Upper lobe of right lung (tissue), 1 donor: ENCODE measurements at regions of chr17 and their contacts with region 1.

Region 1: DNA sequence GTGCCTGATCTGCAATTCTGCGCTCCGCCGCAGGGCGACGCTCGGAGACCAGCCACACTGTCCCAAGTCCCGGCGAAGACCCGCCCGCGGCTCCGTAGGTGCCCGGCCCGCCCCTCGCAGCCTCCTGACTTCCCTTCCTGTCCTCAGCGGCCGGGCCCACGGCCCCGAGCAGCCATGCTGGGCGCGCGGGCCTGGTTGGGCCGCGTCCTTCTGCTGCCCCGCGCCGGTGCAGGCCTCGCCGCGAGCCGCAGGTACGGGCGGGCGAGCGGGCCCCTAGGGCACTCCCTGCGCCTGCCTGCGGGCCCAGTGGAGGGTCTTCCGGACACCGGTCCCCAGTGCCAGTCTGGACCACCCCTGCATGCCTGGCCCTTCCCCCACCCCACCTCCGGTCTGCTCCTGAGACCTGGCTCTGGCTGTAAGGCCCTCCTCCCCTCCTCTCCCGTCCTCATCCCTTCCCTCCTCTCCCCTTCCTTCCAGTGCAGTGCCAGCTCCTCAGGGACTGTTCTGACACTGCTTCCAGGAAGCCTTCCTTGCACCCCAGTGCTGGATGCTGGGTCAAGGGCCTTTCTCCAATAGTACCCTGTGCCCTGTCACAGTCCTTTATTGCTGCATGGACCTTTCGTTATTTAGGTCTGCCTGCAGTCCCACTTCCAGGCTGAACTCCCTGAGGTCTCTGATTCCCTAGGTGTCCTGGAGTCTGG is at the start of gene SPATA20:
- DNase-seq: peak; percentile 96
- ATAC-seq: peak; percentile 87
- H3K4me3 ChIP-seq: peak within 1 kb of the TSS; percentile 63
- H3K27ac ChIP-seq: peak within 1 kb of the TSS; percentile 78
- H3K4me1 ChIP-seq: peaks cover 12% of the 10 kb centered on the region
- H3K27me3 ChIP-seq: no peaks in the 10 kb centered on the region
- CTCF ChIP-seq: peak; percentile 98
- total RNA-seq, gene SPATA20: 31.6 TPM

Region 2: GRCh38 chr17:50129728-50130558 is 417.2 kb before region 1 on chr17 and contains the start of gene SAMD14:
- intact Hi-C with region 1: no loop called
- DNase-seq: peak; percentile 69
- ATAC-seq: peak; percentile 55
- H3K4me3 ChIP-seq: peak within 1 kb of the TSS; percentile 37
- H3K27ac ChIP-seq: peak within 1 kb of the TSS; percentile 36
- H3K4me1 ChIP-seq: peaks cover 18% of the 10 kb centered on the region
- H3K27me3 ChIP-seq: peaks cover 5% of the 10 kb centered on the region
- CTCF ChIP-seq: no peak
- total RNA-seq, gene SAMD14: 21.5 TPM

Region 3: DNA sequence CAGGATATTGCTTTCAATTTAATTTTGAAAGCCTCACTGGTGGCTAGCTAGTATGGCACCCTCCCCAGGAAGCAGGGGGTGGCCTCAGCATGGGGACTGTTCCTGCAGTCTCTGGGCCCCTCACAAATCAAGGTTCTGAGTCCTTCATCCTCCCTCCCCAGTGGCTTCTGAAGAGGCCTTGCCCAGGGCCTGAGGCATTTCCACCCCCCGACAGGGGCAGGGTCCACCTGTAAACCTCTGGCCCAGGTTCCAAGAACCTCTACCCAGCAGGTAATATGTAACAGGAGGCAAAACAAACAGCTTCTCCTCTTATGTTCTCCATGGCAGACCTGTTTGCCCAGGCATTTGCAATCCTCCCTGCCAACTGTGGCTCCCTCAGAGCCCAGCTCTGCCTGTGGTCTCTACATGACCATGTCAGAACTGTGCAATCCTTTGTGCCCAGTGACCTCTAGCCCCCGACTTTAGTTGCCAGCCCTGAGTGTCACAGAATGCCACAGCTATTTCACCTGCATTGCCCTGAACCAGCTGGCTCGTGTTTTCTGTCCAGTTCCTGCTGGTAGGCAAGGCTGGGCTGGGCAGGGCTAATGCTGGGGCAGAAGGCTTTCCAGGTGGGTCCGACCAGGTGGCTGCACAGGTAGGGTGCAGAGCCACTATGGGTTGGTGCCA is 106.9 kb before region 1 on chr17:
- intact Hi-C with region 1: no loop called
- DNase-seq: peak; percentile 71
- ATAC-seq: peak; percentile 86
- H3K4me3 ChIP-seq: no peak overlapping the region
- H3K27ac ChIP-seq: peak overlapping the region; percentile 44
- H3K4me1 ChIP-seq: peaks cover 13% of the 10 kb centered on the region
- H3K27me3 ChIP-seq: no peaks in the 10 kb centered on the region
- CTCF ChIP-seq: no peak

Region 4: GRCh38 chr17:50626037-50626574 is 78.9 kb after region 1 on chr17:
- intact Hi-C with region 1: loop called (anchors 5 kb)
- DNase-seq: peak; percentile 84
- ATAC-seq: peak; percentile 63
- H3K4me3 ChIP-seq: no peak overlapping the region
- H3K27ac ChIP-seq: no peak overlapping the region
- H3K4me1 ChIP-seq: peaks cover 6% of the 10 kb centered on the region
- H3K27me3 ChIP-seq: peaks cover 24% of the 10 kb centered on the region
- CTCF ChIP-seq: peak; percentile 71

Region 5: DNA sequence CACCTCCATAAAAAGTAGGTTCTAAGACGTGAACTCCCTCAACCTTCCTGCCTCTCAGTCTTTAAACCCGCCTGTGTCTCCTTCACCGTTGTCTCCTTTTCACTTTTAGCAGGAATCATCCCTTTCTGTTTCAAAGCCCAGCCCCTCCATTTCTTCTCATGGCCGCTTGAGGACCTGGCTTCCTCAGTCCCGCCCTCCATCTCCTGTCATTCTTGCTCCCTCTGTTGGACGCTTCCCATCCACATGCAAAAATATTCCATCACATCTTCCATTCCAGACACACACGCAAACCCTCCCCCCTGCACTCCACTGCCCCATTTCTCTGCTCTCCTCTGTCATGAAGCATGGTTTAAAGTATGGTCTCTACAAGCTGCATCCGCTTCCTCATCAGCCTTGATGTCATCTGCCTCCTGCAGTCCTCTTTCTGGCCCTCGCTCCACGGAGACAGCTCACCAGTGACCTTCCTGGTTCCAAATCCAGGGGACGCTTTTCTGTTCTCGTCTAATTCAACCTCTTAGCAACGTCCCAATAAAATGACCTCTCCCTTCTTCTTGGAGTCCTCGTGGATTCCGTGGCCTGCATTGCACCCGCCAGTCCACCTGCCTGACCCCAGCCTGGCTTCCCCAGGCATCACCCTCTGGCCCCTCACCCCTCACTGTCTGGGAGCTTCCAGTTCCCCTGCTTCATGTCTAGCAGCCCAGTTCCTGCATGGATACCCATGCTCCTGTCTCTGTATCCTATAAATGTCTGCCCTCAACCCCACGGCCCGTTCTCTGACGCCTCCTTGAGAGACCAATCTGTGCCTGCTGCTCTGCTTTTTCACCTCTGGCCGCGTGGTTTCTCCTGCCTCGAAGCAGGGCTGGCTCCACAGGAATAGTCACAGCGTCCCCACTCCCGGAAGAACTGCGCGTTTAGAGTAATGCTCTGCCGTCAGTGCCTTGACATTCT is 134.4 kb after region 1 on chr17:
- intact Hi-C with region 1: loop called (anchors 10 kb)
- DNase-seq: peak; percentile 47
- ATAC-seq: peak; percentile 67
- H3K4me3 ChIP-seq: no peak overlapping the region
- H3K27ac ChIP-seq: no peak overlapping the region
- H3K4me1 ChIP-seq: peaks cover 7% of the 10 kb centered on the region
- H3K27me3 ChIP-seq: no peaks in the 10 kb centered on the region
- CTCF ChIP-seq: peak; percentile 55

Region 6: DNA sequence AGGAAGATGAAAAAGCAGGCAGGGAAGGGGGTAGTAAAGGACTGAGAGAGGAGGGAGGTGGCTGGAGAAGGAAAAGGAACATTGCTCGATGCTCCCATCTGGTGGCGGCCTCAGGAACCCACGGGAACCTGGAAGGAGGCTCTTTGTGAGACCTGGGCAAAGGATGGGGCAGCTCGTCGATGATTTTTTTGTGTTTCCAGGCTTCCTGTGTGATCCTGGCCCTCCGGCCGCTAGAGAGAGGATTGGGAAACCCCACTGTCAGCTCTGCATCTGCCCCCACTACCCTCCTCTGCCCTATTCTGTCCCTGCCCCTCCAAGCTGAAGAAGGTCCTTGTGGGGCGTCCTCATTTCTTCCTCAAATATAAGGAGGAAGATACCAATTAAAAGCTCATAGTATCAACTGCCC is 294.8 kb after region 1 on chr17:
- intact Hi-C with region 1: loop called (anchors 10 kb)
- DNase-seq: peak; percentile 83
- ATAC-seq: peak; percentile 84
- H3K4me3 ChIP-seq: no peak overlapping the region
- H3K27ac ChIP-seq: no peak overlapping the region
- H3K4me1 ChIP-seq: no peaks in the 10 kb centered on the region
- H3K27me3 ChIP-seq: no peaks in the 10 kb centered on the region
- CTCF ChIP-seq: peak; percentile 75